ENCODE measurements at regions of chr6 and their contacts with region 1.

Region 1: DNA sequence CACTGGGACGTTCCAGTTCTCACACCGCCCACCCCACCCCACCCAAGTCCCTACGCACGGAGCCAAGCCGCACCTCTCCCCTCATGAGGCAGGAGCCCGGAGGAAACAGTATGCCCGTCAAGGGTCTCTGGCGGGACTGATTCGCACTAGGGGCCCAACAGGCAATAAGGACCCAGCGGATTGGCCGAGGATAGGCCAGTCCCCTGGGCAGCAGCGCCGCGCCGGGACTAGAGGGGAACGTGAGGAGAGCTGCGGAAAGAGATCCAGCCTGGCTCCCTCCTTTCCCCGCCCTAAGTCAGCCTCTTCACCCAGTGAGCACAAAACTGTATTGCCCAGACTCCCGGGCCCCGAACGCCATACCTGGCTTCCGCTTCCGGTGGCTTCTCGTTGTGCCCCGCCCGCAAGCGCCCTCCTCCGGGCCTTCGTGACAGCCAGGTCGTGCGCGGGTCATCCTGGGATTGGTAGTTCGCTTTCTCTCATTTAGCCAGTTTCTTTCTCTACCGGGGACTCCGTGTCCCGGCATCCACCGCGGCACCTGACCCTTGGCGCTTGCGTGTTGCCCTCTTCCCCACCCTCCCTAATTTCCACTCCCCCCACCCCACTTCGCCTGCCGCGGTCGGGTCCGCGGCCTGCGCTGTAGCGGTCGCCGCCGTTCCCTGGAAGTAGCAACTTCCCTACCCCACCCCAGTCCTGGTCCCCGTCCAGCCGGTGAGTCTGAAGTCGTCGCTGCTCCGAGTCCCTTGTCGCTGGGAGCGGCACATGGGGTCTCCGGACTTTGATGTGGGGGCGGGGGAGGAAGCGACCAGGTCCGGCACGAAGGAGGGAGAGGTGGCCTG is at the start of gene CSNK2B:
- DNase-seq: peak; percentile 96
- ATAC-seq: peak; percentile 84
- H3K4me3 ChIP-seq: peak within 1 kb of the TSS; percentile 97 to 99
- H3K27ac ChIP-seq: peak within 1 kb of the TSS; percentile 90
- H3K4me1 ChIP-seq: peaks cover 14 to 34% of the 10 kb centered on the region in 2 experiments; a peak in 3 of 4 replicates
- H3K27me3 ChIP-seq: no peaks in the 10 kb centered on the region
- CTCF ChIP-seq: no peak
- POLR2A ChIP-seq: peak; percentile 89
- RAD21 ChIP-seq: no peak
- total RNA-seq, gene CSNK2B: 210 TPM

Region 2: GRCh38 chr6:31403283-31403989 is 262.3 kb before region 1 on chr6 and contains the start of gene MICA:
- CTCF ChIA-PET with region 1: no interaction called
- POLR2A ChIA-PET with region 1: no interaction called
- RAD21 ChIA-PET with region 1: no interaction called
- intact Hi-C with region 1: loop called (anchors 5 kb)
- DNase-seq: peak; percentile 79
- ATAC-seq: peak; percentile 81
- H3K4me3 ChIP-seq: peak within 1 kb of the TSS; percentile 57 to 94
- H3K27ac ChIP-seq: peak within 1 kb of the TSS; percentile 93
- H3K4me1 ChIP-seq: peaks cover 26 to 50% of the 10 kb centered on the region in 2 experiments
- H3K27me3 ChIP-seq: no peaks in the 10 kb centered on the region
- CTCF ChIP-seq: no peak
- POLR2A ChIP-seq: peak; percentile 26
- RAD21 ChIP-seq: no peak
- total RNA-seq, gene MICA: 24.1 TPM

Region 3: DNA sequence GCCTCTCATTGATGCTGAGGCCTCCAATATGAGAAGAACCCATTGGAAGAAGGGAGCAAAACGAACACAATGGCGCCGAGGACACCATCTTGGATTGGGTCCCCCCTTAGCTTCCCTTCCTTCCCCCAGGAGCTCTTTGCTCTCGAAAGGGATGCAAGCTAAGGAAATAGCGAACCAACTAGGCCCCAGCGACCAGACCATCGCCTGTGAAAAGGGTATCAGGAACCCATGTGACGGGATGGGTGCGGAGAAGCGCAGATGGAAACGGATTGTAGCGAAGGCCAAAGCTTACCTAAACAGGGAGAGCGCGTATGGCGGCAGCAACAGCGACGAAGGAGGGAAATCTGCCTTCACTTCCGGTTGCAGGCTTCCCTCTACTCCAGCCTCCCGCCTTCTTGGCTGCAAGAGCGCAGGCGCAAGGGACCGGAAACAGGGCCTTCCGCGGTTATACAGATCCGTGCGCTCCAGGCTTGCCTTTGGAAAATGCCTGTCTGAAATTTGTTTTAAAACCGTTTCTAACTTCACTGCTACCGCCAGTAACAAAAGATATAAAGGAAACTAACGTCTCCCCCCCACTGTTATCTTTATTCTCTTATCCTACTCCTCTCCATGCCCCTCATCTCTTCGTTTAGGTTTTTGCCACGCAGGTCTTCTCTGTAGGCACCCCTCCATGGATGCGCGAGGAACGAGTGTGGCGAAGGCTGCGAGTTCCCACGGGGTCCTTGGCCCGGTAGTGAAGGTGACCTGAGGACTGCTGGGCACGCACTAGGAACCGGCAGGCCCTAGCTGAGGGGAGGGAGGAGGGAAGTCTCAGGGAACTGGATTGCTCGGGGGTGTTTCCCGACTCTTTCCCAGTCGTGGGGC is 123.8 kb before region 1 on chr6 and contains the start of gene DDX39B:
- CTCF ChIA-PET with region 1: interaction called, 5 read pairs
- POLR2A ChIA-PET with region 1: interaction called, 8 read pairs
- RAD21 ChIA-PET with region 1: interaction called in 1 of 2 experiments, 3 read pairs
- intact Hi-C with region 1: loop called (anchors 1 kb)
- DNase-seq: peak; percentile 95
- ATAC-seq: peak; percentile 74
- H3K4me3 ChIP-seq: peak within 1 kb of the TSS; percentile 85 to 98
- H3K27ac ChIP-seq: peak within 1 kb of the TSS; percentile 96
- H3K4me1 ChIP-seq: peaks cover 17 to 36% of the 10 kb centered on the region in 2 experiments
- H3K27me3 ChIP-seq: no peaks in the 10 kb centered on the region
- CTCF ChIP-seq: no peak
- POLR2A ChIP-seq: peak; percentile 79
- RAD21 ChIP-seq: no peak
- total RNA-seq, gene DDX39B: 545 TPM

Region 4: DNA sequence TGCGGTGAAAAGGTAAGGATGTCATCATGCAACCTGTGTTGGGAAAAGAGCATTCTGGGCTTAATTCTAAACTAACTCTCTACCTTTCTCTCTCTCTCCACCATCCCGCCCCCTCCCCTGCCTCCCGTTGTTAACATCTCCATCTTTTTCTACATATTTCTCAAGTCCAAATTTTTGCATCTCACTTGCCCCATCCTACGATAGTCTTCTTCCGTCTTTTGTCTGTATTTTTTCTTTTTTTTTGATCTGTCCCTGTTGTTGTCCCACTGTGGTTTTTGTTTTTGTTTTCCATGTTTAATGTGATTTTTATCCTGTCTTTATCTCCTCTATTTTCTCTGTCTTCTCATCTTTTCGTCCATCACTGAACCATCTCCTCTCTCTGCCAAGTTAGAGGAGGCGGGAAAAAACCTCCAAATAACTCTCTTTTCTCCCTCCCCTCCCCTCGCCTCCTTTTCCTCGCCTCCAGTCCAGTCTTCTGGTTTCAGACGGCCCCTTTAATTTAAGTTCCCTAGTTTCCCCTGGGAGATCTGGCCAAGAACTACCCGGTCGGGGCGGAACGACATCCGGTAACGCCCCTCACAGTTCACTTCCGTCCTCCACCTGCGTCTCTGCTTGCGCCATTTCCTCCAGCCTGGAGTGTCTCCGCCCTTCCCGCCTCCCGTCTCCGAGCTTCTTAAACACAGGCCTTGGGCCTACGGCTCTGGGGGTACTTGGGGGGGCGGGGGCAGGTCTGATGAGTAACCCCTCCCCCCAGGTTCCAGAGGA is 118.6 kb before region 1 on chr6 and contains the start of gene NFKBIL1:
- CTCF ChIA-PET with region 1: interaction called, 5 read pairs
- POLR2A ChIA-PET with region 1: interaction called, 8 read pairs
- RAD21 ChIA-PET with region 1: interaction called in 1 of 2 experiments, 3 read pairs
- intact Hi-C with region 1: loop called (anchors 1 kb)
- DNase-seq: peak; percentile 97
- ATAC-seq: peak; percentile 78
- H3K4me3 ChIP-seq: peak within 1 kb of the TSS; percentile 51 to 67
- H3K27ac ChIP-seq: peak within 1 kb of the TSS; percentile 50
- H3K4me1 ChIP-seq: peaks cover 19 to 30% of the 10 kb centered on the region in 2 experiments
- H3K27me3 ChIP-seq: no peaks in the 10 kb centered on the region
- CTCF ChIP-seq: no peak
- POLR2A ChIP-seq: peak; percentile 37
- RAD21 ChIP-seq: no peak
- total RNA-seq, gene NFKBIL1: 26.6 TPM

Region 5: DNA sequence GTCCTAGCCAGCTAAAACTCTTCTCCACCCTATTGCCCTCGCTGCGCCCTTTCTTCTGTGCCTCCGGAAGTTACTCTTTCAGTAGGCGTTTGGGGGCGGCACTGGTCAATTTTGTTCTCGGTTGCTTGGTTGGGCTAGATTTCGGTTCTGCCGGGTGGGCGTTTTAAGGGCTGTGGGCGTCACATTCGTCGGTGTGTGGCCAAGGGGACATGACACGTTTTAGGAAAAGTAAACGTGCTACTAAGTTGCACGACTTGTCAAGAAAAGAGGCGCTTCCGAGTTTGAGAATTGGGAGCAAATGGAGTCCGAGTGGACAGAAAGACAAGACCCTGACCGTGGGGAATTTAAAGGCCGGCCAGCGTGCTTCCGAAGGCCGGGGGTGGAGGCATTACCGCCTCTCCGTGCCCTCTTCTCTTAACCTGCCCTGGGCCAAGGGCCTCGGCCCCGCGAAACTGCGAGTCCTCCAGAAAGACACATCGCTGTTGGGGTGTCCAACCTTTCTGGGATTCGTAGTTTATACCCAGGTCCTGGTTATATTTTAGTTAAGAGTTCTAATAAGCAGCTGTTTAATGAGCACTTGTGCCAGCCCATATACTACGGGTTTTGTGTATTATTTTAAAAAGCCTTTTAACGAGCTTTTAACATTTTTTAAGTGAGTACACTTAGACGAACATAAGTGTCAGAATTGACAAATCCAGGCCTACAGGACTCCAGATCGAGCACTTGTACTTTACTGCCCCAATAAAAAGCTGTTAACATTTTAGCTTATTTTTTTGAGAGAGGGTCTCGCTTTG is 12.6 kb before region 1 on chr6:
- CTCF ChIA-PET with region 1: no interaction called
- POLR2A ChIA-PET with region 1: interaction called, 32 read pairs
- RAD21 ChIA-PET with region 1: no interaction called
- intact Hi-C with region 1: no loop called
- DNase-seq: no peak
- ATAC-seq: peak; percentile 75
- H3K4me3 ChIP-seq: peak overlapping the region; percentile 55 to 66
- H3K27ac ChIP-seq: peak overlapping the region; percentile 89
- H3K4me1 ChIP-seq: peaks cover 7 to 21% of the 10 kb centered on the region in 2 experiments
- H3K27me3 ChIP-seq: no peaks in the 10 kb centered on the region
- CTCF ChIP-seq: no peak
- POLR2A ChIP-seq: peak; percentile 68
- RAD21 ChIP-seq: no peak

Region 6: GRCh38 chr6:31901953-31902643 is 236.4 kb after region 1 on chr6 and contains the start of gene ZBTB12:
- CTCF ChIA-PET with region 1: no interaction called
- POLR2A ChIA-PET with region 1: no interaction called
- RAD21 ChIA-PET with region 1: no interaction called
- intact Hi-C with region 1: loop called (anchors 5 kb)
- DNase-seq: peak; percentile 89
- ATAC-seq: peak; percentile 73
- H3K4me3 ChIP-seq: peak within 1 kb of the TSS; percentile 56 to 63
- H3K27ac ChIP-seq: peak within 1 kb of the TSS; percentile 64
- H3K4me1 ChIP-seq: peaks cover 10 to 31% of the 10 kb centered on the region in 2 experiments; a peak in 3 of 4 replicates
- H3K27me3 ChIP-seq: no peaks in the 10 kb centered on the region
- CTCF ChIP-seq: no peak
- POLR2A ChIP-seq: no peak
- RAD21 ChIP-seq: peak; percentile 64
- total RNA-seq, gene ZBTB12: 10.3 TPM

Measured in HCT116 (cell line).